Tibial artery (tissue), 4 donors: ENCODE measurements at regions of chr3 and their contacts with region 1.

Region 1: DNA sequence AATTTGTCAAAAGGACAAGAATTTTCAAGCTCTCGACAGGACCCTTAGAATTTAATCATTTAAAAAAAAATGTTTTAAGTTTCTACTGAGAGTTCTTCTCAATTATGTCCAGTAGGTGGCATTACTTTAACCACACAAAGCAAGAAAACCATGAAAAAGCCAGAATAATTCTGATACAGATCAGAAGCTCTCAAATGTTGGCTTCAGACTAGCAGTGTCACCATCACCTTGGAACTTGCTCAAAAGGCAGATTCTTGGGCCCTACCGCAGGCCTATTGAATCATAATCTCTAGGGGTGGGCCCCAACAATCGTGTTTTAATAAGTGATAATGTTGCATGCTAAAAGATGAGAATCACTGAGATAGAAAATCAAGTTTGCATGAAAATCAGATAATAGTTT is 99.5 kb upstream of the KCNMB2 start:
- DNase-seq: no peak
- H3K4me3 ChIP-seq: no peak overlapping the region
- H3K27ac ChIP-seq: no peak overlapping the region
- H3K4me1 ChIP-seq: peaks cover 0 to 13% (median 2%) of the 10 kb centered on the region in 4 donors
- H3K27me3 ChIP-seq: no peaks in the 10 kb centered on the region
- CTCF ChIP-seq: peak; percentile 43 to 55

Region 2: DNA sequence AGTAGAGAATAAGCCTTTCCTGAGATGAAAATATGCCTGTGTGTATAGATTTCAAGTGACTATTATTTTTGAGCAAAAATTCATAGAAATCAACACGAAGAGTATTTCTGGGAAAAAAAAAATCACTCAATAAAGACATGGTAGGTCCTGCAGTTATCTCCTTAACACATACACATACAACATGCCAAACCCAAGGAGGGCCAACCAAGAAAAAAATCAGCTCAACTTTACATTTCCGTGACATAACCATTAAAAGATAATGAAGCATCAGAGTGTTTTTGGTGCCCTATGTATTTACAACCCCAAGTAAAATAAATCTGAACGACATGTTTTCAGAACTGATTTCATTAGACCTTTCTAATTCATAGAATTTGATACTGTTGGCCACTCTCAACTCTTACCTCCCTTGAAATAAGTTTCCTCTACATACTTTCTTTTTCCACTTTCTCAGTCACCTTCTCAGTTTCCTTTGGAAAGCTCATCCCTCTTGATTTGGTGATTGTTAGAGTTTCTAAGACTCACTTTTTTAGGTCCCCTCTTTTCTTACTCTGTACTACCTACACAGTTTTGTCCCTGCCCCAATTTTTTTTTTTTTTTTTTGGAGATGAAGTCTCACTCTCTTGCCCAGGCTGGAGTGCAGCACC is 1401.8 kb before region 1 on chr3:
- intact Hi-C with region 1: loop called (anchors 5 kb)
- DNase-seq: no peak
- H3K4me3 ChIP-seq: no peak overlapping the region
- H3K27ac ChIP-seq: no peak overlapping the region
- H3K4me1 ChIP-seq: peaks cover 0 to 14% (median 0%) of the 10 kb centered on the region in 4 donors
- H3K27me3 ChIP-seq: no peaks in the 10 kb centered on the region
- CTCF ChIP-seq: no peak

Region 3: DNA sequence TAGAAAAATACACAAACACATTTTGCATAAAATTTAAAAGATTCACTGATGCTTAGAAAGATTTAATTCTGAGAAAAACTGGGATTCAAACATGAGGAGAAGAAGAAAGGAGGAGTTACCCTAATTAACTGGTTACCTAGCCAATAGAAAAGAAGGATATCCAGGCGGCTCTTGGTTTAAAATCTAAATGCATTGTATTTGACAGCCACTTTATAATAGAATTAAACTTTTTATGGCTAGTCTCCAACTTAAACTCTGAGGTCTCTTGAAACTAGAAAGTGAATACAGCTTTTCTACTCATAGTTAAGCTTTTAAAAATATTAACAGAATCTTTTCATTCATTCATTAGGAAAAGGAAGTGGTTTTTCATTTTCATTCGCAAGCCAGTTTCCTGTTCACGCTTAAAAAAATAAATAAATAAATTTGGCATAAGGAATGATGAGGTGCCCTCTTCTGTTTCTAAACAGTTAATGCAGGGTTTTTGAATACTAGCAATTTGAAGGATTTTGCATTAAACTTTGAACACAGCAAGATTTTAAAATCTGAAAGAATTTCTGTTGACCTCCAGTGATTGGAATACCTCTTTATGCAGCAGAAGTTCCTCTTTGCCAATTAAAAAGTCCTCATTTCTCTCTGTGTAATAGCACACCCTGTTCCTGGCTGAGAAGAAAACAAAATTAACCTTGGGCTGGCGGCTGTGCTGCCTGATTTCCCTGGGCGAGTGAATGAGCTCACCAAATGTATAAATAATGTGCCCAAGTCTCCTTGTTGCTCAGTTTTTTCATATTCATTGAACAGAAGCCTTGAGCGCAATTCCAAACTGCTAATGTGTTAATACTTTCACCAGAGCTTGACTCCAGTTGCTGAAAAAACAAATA is 529.8 kb after region 1 on chr3:
- intact Hi-C with region 1: loop called (anchors 10 kb)
- DNase-seq: no peak
- H3K4me3 ChIP-seq: no peak overlapping the region
- H3K27ac ChIP-seq: no peak overlapping the region
- H3K4me1 ChIP-seq: peaks cover 0 to 9% (median 0%) of the 10 kb centered on the region in 4 donors
- H3K27me3 ChIP-seq: no peaks in the 10 kb centered on the region
- CTCF ChIP-seq: peak; percentile 51 to 53